Prostate gland (tissue), 2 donors: ENCODE measurements at regions of chr4 and their contacts with region 1.

Region 1: GRCh38 chr4:131013226-131013625 is 1917.3 kb downstream of the C4orf33 start:
- DNase-seq: no peak
- H3K4me3 ChIP-seq: no peak overlapping the region
- H3K27ac ChIP-seq: no peak overlapping the region
- H3K4me1 ChIP-seq: no peaks in the 10 kb centered on the region
- H3K27me3 ChIP-seq: no peaks in the 10 kb centered on the region
- CTCF ChIP-seq: no peak
- POLR2A ChIP-seq: no peak

Region 2: DNA sequence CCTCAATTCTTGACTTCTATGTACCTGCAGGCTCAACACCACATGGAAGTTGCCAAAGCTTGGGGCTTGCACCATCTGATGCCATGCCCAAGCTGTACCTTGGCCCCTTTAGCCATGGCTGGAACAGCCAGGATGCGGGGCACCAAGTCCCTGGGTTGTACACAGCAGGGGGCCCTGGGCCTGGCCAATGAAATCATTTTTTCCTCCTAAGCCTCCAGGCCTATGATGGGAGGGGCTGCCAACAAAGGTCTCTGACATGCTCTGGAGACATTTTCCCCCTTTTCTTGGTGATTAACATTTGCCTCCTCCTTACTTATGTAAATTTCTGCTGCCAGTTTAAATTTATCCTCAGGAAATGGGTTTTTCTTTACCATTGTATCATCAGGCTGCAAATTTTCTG is 489.2 kb before region 1 on chr4:
- intact Hi-C with region 1: no loop called
- DNase-seq: no peak
- H3K4me3 ChIP-seq: no peak overlapping the region
- H3K27ac ChIP-seq: no peak overlapping the region
- H3K4me1 ChIP-seq: no peaks in the 10 kb centered on the region
- H3K27me3 ChIP-seq: no peaks in the 10 kb centered on the region
- CTCF ChIP-seq: no peak
- POLR2A ChIP-seq: no peak

Region 3: GRCh38 chr4:131113273-131113672 is 100.0 kb after region 1 on chr4:
- intact Hi-C with region 1: loop called (anchors 5 kb)
- DNase-seq: no peak
- H3K4me3 ChIP-seq: no peak overlapping the region
- H3K27ac ChIP-seq: no peak overlapping the region
- H3K4me1 ChIP-seq: no peaks in the 10 kb centered on the region
- H3K27me3 ChIP-seq: no peaks in the 10 kb centered on the region
- CTCF ChIP-seq: no peak
- POLR2A ChIP-seq: no peak